ENCODE measurements at regions of chr17 and their contacts with region 1.

Region 1: GRCh38 chr17:63611354-63611753 is 10.7 kb downstream of the TACO1 start:
- DNase-seq: no peak
- H3K4me3 ChIP-seq: no peak overlapping the region
- H3K27ac ChIP-seq: no peak overlapping the region
- H3K4me1 ChIP-seq: no peaks in the 10 kb centered on the region
- H3K27me3 ChIP-seq: no peaks in the 10 kb centered on the region
- CTCF ChIP-seq: no peak
- EP300 ChIP-seq: no peak
- POLR2A ChIP-seq: no peak

Region 2: GRCh38 chr17:63425482-63425881 is 185.9 kb before region 1 on chr17:
- intact Hi-C with region 1: loop called (anchors 1 kb)
- DNase-seq: peak; percentile 88
- H3K4me3 ChIP-seq: no peak overlapping the region
- H3K27ac ChIP-seq: no peak overlapping the region
- H3K4me1 ChIP-seq: no peaks in the 10 kb centered on the region
- H3K27me3 ChIP-seq: no peaks in the 10 kb centered on the region
- CTCF ChIP-seq: peak; percentile 75 to 92 (median 91)
- EP300 ChIP-seq: no peak
- POLR2A ChIP-seq: no peak

Region 3: GRCh38 chr17:63445979-63446691 is 165.2 kb before region 1 on chr17 and contains the start of gene CYB561:
- intact Hi-C with region 1: loop called (anchors 5 kb)
- DNase-seq: peak; percentile 89
- H3K4me3 ChIP-seq: peak within 1 kb of the TSS; percentile 41 to 71 (median 63)
- H3K27ac ChIP-seq: peak within 1 kb of the TSS; percentile 67 to 80 (median 74)
- H3K4me1 ChIP-seq: peaks cover 0 to 28% (median 18%) of the 10 kb centered on the region in 4 donors
- H3K27me3 ChIP-seq: no peaks in the 10 kb centered on the region
- CTCF ChIP-seq: peak in 3 of 4 experiments; percentile 17 to 52 (median 41)
- EP300 ChIP-seq: no peak
- POLR2A ChIP-seq: no peak
- total RNA-seq, gene CYB561: 6.3 to 16.4 (median 12.9) TPM

Region 4: DNA sequence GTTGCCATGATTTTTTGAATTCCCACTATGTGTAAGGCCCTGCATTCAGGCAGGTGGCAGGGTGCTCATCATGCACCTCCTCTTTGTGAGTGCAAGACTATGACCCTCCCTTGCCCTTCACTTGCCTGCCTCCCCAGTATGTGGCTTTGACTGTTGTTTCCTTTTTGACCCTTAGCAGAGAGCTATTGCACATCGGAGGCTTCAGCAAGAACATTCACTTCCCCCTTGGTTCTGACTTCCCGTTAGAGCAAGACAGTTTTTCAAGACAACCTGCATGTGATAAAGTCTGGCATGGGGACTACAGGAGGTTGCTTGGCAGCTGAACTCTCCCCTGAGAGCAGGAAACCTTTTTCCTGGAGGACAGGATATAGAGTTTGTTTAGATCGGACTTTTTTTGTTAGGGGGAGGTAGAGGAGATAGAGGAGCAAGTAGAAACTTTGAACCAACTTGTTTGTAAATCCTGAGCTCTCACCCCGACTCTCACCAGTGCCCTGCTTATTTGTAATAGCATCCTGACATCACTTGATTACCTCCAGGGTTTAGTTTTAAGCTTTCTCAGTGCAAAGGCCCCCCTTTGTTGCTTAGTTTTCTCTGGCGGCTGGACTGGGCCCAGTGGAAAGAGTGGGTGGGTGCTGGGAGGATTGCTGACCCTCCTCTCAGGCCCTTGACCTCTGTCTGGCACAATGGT is 54.3 kb after region 1 on chr17:
- intact Hi-C with region 1: no loop called
- DNase-seq: no peak
- H3K4me3 ChIP-seq: no peak overlapping the region
- H3K27ac ChIP-seq: peak overlapping the region; percentile 22 to 51 (median 38)
- H3K4me1 ChIP-seq: peaks cover 0 to 27% (median 0%) of the 10 kb centered on the region in 4 donors
- H3K27me3 ChIP-seq: no peaks in the 10 kb centered on the region
- CTCF ChIP-seq: no peak
- EP300 ChIP-seq: no peak
- POLR2A ChIP-seq: no peak

Measured in sigmoid colon (tissue), 7 donors.